ENCODE measurements at regions of chr15 and their contacts with region 1.

Region 1: GRCh38 chr15:61169904-61170695 is 59.0 kb downstream of the RORA start:
- DNase-seq: no peak
- ATAC-seq: no peak

Region 2: GRCh38 chr15:61834076-61834697 is 664.1 kb after region 1 on chr15:
- intact Hi-C with region 1: loop called in 1 of 2 experiments (anchors 5 kb)
- DNase-seq: peak; percentile 79
- ATAC-seq: peak; percentile 79 to 85

Measured in left cardiac atrium (tissue), 4 donors.